IMR-90 (cell line): ENCODE measurements at regions of chr19 and their contacts with region 1.

Region 1: DNA sequence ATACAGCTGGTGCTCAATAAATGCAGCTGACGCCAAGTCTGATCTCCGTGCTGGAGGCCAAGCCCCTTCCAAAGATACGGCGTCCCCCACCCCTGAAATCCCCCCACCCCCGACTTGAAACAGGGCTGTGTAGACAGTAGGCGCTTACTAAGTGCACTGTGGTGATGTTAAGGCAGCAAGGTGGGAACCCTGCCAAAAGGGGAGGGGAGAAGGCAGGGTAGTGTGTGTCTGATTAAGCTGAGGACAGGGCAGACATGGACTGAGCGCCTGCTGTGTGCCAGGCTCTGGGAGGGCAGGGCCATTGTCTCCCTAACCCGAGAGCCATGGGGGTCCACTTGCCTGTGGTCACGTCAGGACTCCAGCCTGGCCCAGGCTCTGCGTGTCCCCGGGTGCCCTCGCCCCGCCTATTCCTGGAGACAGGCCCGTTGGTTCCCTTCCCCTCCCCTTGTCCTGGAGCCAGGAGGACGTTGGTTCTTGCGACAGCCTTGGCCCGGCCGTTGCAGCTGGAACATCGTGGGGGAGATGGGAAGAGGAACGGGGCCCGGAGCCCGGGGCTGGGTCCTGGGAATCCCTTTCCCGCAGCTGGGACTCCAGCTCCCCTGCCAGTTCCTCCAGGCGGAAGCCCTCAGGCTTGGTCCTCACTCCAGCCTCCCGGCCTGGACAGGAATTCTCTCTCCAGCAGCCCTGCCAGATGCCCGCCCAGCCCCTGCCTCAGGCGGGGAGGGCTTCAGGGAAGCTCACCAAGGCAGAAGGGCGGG is 1.7 kb upstream of the ELANE start:
- DNase-seq: peak; percentile 81
- ATAC-seq: peak; percentile 88
- H3K4me3 ChIP-seq: no peak overlapping the region
- H3K27ac ChIP-seq: peak overlapping the region; percentile 90
- H3K4me1 ChIP-seq: peaks cover 6% of the 10 kb centered on the region
- H3K27me3 ChIP-seq: peaks cover 4% of the 10 kb centered on the region; the same call in 1 of the 2 replicates
- CTCF ChIP-seq: no peak
- POLR2A ChIP-seq: no peak
- RAD21 ChIP-seq: no peak

Region 2: GRCh38 chr19:814258-815078 is 35.9 kb before region 1 on chr19:
- CTCF ChIA-PET with region 1: no interaction called
- POLR2A ChIA-PET with region 1: no interaction called
- dilution Hi-C with region 1: no loop called
- in situ Hi-C with region 1: no loop called
- intact Hi-C with region 1: loop called (anchors 1 kb)
- DNase-seq: no peak
- ATAC-seq: no peak
- H3K4me3 ChIP-seq: no peak overlapping the region
- H3K27ac ChIP-seq: no peak overlapping the region
- H3K4me1 ChIP-seq: no peaks in the 10 kb centered on the region
- H3K27me3 ChIP-seq: no peaks in the 10 kb centered on the region
- CTCF ChIP-seq: no peak
- POLR2A ChIP-seq: no peak
- RAD21 ChIP-seq: no peak

Region 3: GRCh38 chr19:827314-827782 is 23.1 kb before region 1 on chr19:
- CTCF ChIA-PET with region 1: no interaction called
- POLR2A ChIA-PET with region 1: no interaction called
- dilution Hi-C with region 1: no loop called
- in situ Hi-C with region 1: no loop called
- intact Hi-C with region 1: no loop called
- DNase-seq: no peak
- ATAC-seq: no peak
- H3K4me3 ChIP-seq: no peak overlapping the region
- H3K27ac ChIP-seq: no peak overlapping the region
- H3K4me1 ChIP-seq: peaks cover 3% of the 10 kb centered on the region; the same call in 1 of the 2 replicates
- H3K27me3 ChIP-seq: peaks cover 2% of the 10 kb centered on the region; the same call in 1 of the 2 replicates
- CTCF ChIP-seq: no peak
- POLR2A ChIP-seq: no peak
- RAD21 ChIP-seq: no peak

Region 4: GRCh38 chr19:900302-901111 is 50.1 kb after region 1 on chr19:
- CTCF ChIA-PET with region 1: no interaction called
- POLR2A ChIA-PET with region 1: no interaction called
- dilution Hi-C with region 1: no loop called
- in situ Hi-C with region 1: no loop called
- intact Hi-C with region 1: no loop called
- DNase-seq: no peak
- ATAC-seq: peak; percentile 46
- H3K4me3 ChIP-seq: no peak overlapping the region
- H3K27ac ChIP-seq: no peak overlapping the region
- H3K4me1 ChIP-seq: peaks cover 2% of the 10 kb centered on the region; the same call in 1 of the 2 replicates
- H3K27me3 ChIP-seq: no peaks in the 10 kb centered on the region
- CTCF ChIP-seq: no peak
- POLR2A ChIP-seq: no peak
- RAD21 ChIP-seq: no peak